ENCODE measurements at regions of chr7 and their contacts with region 1.

Region 1: GRCh38 chr7:66043681-66044497 is 31.7 kb upstream of the ASL start:
- DNase-seq: peak; percentile 60
- ATAC-seq: peak; percentile 87
- H3K4me3 Mint-ChIP-seq: peak overlapping the region; percentile 72
- H3K27ac Mint-ChIP-seq: no peak overlapping the region
- H3K4me1 Mint-ChIP-seq: peaks cover 4% of the 10 kb centered on the region
- H3K27me3 Mint-ChIP-seq: peaks cover 18% of the 10 kb centered on the region
- CTCF ChIP-seq: no peak

Region 2: GRCh38 chr7:66033471-66034385 is 10.2 kb before region 1 on chr7:
- CTCF ChIA-PET with region 1: interaction called, 11 read pairs
- POLR2A ChIA-PET with region 1: no interaction called
- DNase-seq: no peak
- ATAC-seq: no peak
- H3K4me3 Mint-ChIP-seq: no peak overlapping the region
- H3K27ac Mint-ChIP-seq: no peak overlapping the region
- H3K4me1 Mint-ChIP-seq: no peaks in the 10 kb centered on the region
- H3K27me3 Mint-ChIP-seq: no peaks in the 10 kb centered on the region
- CTCF ChIP-seq: no peak

Region 3: GRCh38 chr7:66055321-66055956 is 11.6 kb after region 1 on chr7:
- CTCF ChIA-PET with region 1: no interaction called
- POLR2A ChIA-PET with region 1: no interaction called
- DNase-seq: no peak
- ATAC-seq: no peak
- H3K4me3 Mint-ChIP-seq: no peak overlapping the region
- H3K27ac Mint-ChIP-seq: no peak overlapping the region
- H3K4me1 Mint-ChIP-seq: no peaks in the 10 kb centered on the region
- H3K27me3 Mint-ChIP-seq: no peaks in the 10 kb centered on the region; the same call in 1 of the 2 replicates
- CTCF ChIP-seq: no peak

Measured in WTC11 (cell line).